Activated naive CD4-positive, alpha-beta T cell treated with anti-CD3 and anti-CD28 coated beads, Interleukin-2, amount 10 ng/mL, durations not matched to agents 7 days and 5 days (primary cell): ENCODE measurements at regions of chr1 and their contacts with region 1.

Region 1: DNA sequence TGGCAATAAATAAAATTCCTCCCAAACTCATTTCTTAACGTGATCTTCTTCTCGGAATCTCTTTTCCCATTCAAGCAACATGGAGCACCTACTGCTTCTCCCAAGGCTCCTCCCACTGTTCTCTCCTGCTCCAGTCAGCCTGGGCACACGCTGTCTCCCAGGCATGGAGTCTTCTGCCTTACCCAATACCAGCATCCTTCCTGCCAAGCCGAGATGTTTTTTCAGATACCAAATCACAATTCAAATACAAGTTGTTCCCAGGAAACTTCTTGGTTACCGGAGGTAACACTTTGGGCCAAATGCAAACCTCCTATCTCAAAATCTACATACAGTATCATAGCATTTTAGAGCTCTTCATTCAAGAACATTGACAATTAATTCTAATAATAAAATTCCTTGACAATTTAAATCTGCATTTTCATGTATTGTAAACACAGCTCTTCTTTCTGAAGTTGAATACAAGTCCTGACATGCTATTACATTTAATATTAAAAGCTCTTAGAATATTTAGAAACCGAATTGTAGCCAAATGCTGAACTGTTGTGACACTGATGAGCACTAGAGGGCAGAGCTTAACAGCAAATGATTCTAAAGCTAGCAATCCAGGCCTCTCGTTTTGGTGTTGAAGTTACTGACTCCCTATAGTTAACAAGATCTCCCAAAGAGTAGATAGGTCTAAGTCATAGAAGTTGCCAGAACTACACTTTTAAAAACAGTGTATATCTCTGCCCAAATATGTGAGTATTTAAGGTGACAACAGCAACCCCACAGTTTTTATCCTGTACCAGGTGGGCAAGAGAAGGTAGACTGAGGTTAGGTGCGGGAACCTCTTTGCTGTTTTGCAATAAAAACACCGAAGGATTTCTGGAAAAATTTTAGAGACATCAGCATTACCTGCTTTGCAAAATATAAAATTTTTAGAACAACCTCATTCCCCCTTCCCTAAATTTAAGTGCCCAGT is 52.3 kb downstream of the BCAR3 start:
- DNase-seq: peak; percentile 56
- H3K4me3 Mint-ChIP-seq: no peak overlapping the region
- H3K27ac Mint-ChIP-seq: no peak overlapping the region
- H3K4me1 Mint-ChIP-seq: no peaks in the 10 kb centered on the region
- H3K27me3 Mint-ChIP-seq: peaks cover 5% of the 10 kb centered on the region

Region 2: GRCh38 chr1:93567255-93567918 is 62.0 kb before region 1 on chr1:
- CTCF ChIA-PET with region 1: no interaction called
- DNase-seq: no peak
- H3K4me3 Mint-ChIP-seq: no peak overlapping the region
- H3K27ac Mint-ChIP-seq: no peak overlapping the region
- H3K4me1 Mint-ChIP-seq: no peaks in the 10 kb centered on the region
- H3K27me3 Mint-ChIP-seq: no peaks in the 10 kb centered on the region

Region 3: DNA sequence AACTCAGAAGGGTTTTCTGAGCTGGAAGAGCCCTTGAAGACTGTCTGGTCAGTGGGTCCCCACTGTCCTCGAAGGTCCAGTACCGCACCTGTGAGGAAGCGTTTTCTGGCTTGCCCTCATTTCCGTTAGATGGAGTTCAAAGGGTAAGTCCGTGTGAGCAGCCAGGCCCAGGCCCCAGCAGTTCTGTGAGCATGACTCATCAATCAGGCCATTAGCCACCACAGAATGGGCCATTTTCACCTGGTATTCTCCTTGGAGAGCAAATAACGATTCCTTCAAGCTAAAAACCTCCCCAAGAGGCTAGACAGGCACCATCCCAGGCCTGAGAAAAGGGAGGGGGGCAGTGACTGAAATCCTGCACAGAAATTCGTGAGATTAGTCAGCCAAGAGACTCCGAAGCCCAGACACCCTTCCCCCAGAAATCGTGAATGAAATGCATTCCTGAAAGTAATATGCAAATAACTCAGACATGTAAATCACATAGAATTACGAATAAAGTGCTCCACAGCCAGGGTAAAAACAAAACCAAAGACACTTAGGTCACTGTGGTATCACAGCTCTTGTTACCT is 13.7 kb before region 1 on chr1:
- CTCF ChIA-PET with region 1: interaction called, 13 read pairs
- DNase-seq: no peak
- H3K4me3 Mint-ChIP-seq: no peak overlapping the region
- H3K27ac Mint-ChIP-seq: no peak overlapping the region
- H3K4me1 Mint-ChIP-seq: peaks cover 2% of the 10 kb centered on the region
- H3K27me3 Mint-ChIP-seq: peaks cover 4% of the 10 kb centered on the region

Region 4: GRCh38 chr1:93765099-93765498 is 135.7 kb after region 1 on chr1:
- CTCF ChIA-PET with region 1: no interaction called
- DNase-seq: no peak
- H3K4me3 Mint-ChIP-seq: no peak overlapping the region
- H3K27ac Mint-ChIP-seq: no peak overlapping the region
- H3K4me1 Mint-ChIP-seq: peaks cover 9% of the 10 kb centered on the region
- H3K27me3 Mint-ChIP-seq: peaks cover 34% of the 10 kb centered on the region

Region 5: GRCh38 chr1:93814059-93814794 is 184.8 kb after region 1 on chr1:
- CTCF ChIA-PET with region 1: interaction called, 297 read pairs
- DNase-seq: peak; percentile 72
- H3K4me3 Mint-ChIP-seq: no peak overlapping the region
- H3K27ac Mint-ChIP-seq: no peak overlapping the region
- H3K4me1 Mint-ChIP-seq: peaks cover 21% of the 10 kb centered on the region
- H3K27me3 Mint-ChIP-seq: no peaks in the 10 kb centered on the region

Region 6: GRCh38 chr1:93846211-93846991 is 217.0 kb after region 1 on chr1:
- CTCF ChIA-PET with region 1: interaction called, 105 read pairs
- DNase-seq: peak; percentile 86
- H3K4me3 Mint-ChIP-seq: peak overlapping the region; percentile 88
- H3K27ac Mint-ChIP-seq: peak overlapping the region; percentile 96
- H3K4me1 Mint-ChIP-seq: peaks cover 31% of the 10 kb centered on the region
- H3K27me3 Mint-ChIP-seq: peaks cover 19% of the 10 kb centered on the region